HCT116 (cell line): ENCODE measurements at regions of chr20 and their contacts with region 1.

Region 1: GRCh38 chr20:35463455-35464300 is 8.3 kb downstream of the CEP250 start:
- DNase-seq: peak; percentile 40
- ATAC-seq: peak; percentile 87
- H3K4me3 ChIP-seq: no peak overlapping the region
- H3K27ac ChIP-seq: no peak overlapping the region
- H3K4me1 ChIP-seq: peaks cover 21 to 22% of the 10 kb centered on the region in 2 experiments
- H3K27me3 ChIP-seq: no peaks in the 10 kb centered on the region
- CTCF ChIP-seq: peak; percentile 52 to 88 (median 75); a peak in 5 of 6 replicates
- POLR2A ChIP-seq: no peak
- RAD21 ChIP-seq: peak; percentile 77

Region 2: DNA sequence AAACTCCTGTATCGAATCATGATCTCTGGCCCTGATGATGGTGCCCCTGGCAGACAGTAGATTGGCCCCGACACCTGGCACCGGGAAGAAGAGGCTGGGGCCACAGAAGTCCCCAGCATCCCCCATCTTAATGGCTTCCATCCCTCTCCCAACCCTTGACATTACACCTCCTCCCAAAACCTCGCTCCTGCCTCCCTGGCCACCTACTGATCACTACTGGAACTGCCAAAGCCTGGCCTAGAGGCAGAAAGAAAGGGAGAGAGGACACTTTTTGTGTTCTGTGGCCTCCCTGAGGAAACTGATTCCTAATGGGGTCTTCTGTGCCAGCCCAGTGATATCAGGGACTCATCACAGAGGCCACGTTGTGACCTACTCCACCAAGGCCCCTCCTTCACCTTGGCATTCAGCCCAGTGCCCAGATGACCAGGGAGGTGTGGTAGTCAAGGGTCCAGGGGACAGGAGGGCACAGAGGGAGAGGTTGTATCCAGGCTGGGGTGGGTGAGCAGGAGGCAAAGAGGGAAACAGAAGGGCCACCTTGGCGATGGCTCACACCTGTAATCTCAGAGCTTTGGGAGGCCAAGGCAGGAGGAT is 59.7 kb after region 1 on chr20:
- CTCF ChIA-PET with region 1: no interaction called
- POLR2A ChIA-PET with region 1: no interaction called
- RAD21 ChIA-PET with region 1: no interaction called
- intact Hi-C with region 1: loop called (anchors 1 kb)
- DNase-seq: no peak
- ATAC-seq: peak; percentile 94
- H3K4me3 ChIP-seq: no peak overlapping the region
- H3K27ac ChIP-seq: no peak overlapping the region
- H3K4me1 ChIP-seq: peaks cover 0 to 6% of the 10 kb centered on the region in 2 experiments; a peak in 2 of 4 replicates
- H3K27me3 ChIP-seq: no peaks in the 10 kb centered on the region
- CTCF ChIP-seq: peak; percentile 34 to 83 (median 73); a peak in 4 of 6 replicates
- POLR2A ChIP-seq: no peak
- RAD21 ChIP-seq: peak; percentile 48